MCF 10A (cell line): ENCODE measurements at regions of chr20 and their contacts with region 1.

Region 1: DNA sequence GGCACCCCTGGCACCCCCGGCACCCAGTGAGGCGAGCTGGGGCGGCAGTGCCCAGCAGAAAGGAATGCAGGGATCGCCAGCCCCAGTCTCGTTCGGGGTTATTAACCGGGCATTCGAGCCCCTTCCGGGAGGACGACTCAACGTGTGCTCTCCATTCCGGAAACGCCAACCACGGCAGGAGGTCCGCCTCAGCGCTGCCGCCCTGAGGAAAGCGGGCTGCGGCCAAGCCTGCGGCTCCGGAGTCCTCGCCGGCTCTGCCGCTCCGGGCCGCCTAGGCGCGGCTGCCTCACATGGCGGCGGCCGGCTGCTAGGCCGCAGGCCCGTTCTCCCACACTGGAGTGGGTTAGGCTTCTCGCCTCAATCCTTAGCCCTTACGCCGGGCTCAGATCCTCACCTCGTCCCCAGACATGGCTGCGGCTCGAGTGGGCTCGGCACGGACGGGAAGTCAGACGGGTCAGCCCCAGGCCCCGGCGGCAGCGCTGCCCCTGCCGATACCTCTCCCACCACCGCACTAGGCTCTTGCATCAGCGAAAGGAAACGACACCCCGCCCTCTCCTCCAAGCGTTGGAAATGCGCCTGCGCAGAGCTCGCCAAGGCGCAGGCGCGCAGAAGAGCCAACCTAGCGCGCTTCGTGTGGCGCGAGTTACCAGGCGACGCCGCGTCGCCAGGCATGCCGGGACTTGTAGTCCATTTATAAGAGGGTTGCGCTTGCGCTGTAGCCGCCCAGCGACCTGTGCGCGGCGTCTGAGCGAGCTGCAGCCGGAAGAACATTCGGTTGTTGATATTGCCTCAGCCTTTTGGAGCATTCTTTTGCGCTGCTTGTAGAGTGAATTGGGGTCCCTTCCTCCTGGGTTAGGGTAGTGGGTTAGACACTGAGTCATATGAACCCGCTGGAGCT is at the start of gene EIF2S2:
- DNase-seq: peak; percentile 98
- H3K4me3 Mint-ChIP-seq: peak within 1 kb of the TSS; percentile 91
- H3K27ac Mint-ChIP-seq: peak within 1 kb of the TSS; percentile 98
- H3K4me1 Mint-ChIP-seq: peaks cover 34% of the 10 kb centered on the region
- H3K27me3 Mint-ChIP-seq: no peaks in the 10 kb centered on the region
- CTCF ChIP-seq: no peak
- total RNA-seq, gene EIF2S2: 151 and 191 TPM in 2 replicates

Region 2: GRCh38 chr20:33719989-33720709 is 391.8 kb before region 1 on chr20 and contains the start of gene PXMP4:
- CTCF ChIA-PET with region 1: no interaction called
- POLR2A ChIA-PET with region 1: interaction called, 15 read pairs
- intact Hi-C with region 1: no loop called
- DNase-seq: peak; percentile 98
- H3K4me3 Mint-ChIP-seq: peak within 1 kb of the TSS; percentile 67
- H3K27ac Mint-ChIP-seq: peak within 1 kb of the TSS; percentile 0
- H3K4me1 Mint-ChIP-seq: peaks cover 9% of the 10 kb centered on the region
- H3K27me3 Mint-ChIP-seq: no peaks in the 10 kb centered on the region
- CTCF ChIP-seq: no peak
- total RNA-seq, gene PXMP4: 3.9 and 5.2 TPM in 2 replicates

Region 3: GRCh38 chr20:33803921-33804337 is 308.0 kb before region 1 on chr20:
- CTCF ChIA-PET with region 1: interaction called, 3 read pairs
- POLR2A ChIA-PET with region 1: interaction called, 13 read pairs
- intact Hi-C with region 1: no loop called
- DNase-seq: peak; percentile 40
- H3K4me3 Mint-ChIP-seq: no peak overlapping the region
- H3K27ac Mint-ChIP-seq: no peak overlapping the region
- H3K4me1 Mint-ChIP-seq: no peaks in the 10 kb centered on the region
- H3K27me3 Mint-ChIP-seq: no peaks in the 10 kb centered on the region
- CTCF ChIP-seq: no peak

Region 4: DNA sequence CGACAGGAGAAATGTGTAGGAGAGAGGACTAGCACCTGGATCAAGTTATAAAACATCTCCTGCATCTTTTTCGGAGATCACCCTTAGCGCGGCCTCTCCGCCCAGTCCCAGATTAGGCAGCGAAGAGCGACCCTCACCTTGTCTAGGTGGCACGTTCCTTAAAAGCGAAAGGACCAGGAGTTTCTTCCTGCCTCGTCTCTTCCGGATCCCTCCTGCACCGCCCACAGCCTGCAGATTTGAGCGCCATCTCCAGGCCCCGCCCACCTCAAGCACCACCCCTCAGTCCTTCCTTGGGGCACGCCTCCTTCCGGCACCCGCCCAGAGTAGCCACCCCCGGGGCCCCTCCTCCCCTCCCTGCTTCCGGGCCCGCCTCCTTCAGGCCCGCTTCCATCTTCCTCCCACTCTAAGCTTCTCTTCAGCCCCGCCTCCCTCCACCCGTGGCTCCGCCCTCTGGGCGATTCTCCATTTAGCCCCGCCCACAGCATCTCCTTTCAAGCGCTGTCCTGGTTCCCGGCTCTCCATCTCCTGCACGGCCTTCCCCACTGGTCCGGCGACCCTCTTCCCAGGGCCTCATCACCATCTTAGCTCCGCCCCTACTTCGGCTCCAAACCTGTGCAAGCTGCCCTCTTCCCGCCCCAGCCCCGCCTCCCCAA is 118.9 kb before region 1 on chr20:
- CTCF ChIA-PET with region 1: no interaction called
- POLR2A ChIA-PET with region 1: interaction called, 54 read pairs
- intact Hi-C with region 1: no loop called
- DNase-seq: peak; percentile 98
- H3K4me3 Mint-ChIP-seq: peak overlapping the region; percentile 95
- H3K27ac Mint-ChIP-seq: peak overlapping the region; percentile 96
- H3K4me1 Mint-ChIP-seq: peaks cover 16% of the 10 kb centered on the region
- H3K27me3 Mint-ChIP-seq: no peaks in the 10 kb centered on the region
- CTCF ChIP-seq: no peak

Region 5: DNA sequence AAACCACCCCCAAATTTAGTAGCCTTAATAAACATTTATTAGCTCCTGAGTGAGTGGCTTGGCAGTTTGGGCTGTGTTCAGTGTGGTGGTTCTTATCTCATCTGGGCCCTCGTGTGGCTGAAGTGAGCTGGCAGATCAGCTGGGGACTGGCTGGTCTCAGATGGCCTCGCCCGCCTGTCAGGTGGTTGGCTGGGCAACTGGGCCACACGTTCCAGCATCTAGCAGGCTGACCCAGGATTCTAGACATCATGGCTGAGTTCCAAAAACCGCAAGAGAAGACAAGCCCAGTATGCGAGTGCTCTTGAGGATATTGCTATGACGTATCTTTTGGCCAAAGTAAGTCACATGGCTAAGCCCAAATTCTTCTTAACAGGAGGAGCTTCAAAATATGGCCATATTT is 28.8 kb before region 1 on chr20:
- CTCF ChIA-PET with region 1: interaction called, 6 read pairs
- POLR2A ChIA-PET with region 1: interaction called, 57 read pairs
- intact Hi-C with region 1: no loop called
- DNase-seq: peak; percentile 96
- H3K4me3 Mint-ChIP-seq: no peak overlapping the region
- H3K27ac Mint-ChIP-seq: peak overlapping the region; percentile 82
- H3K4me1 Mint-ChIP-seq: peaks cover 24% of the 10 kb centered on the region
- H3K27me3 Mint-ChIP-seq: no peaks in the 10 kb centered on the region
- CTCF ChIP-seq: no peak

Region 6: DNA sequence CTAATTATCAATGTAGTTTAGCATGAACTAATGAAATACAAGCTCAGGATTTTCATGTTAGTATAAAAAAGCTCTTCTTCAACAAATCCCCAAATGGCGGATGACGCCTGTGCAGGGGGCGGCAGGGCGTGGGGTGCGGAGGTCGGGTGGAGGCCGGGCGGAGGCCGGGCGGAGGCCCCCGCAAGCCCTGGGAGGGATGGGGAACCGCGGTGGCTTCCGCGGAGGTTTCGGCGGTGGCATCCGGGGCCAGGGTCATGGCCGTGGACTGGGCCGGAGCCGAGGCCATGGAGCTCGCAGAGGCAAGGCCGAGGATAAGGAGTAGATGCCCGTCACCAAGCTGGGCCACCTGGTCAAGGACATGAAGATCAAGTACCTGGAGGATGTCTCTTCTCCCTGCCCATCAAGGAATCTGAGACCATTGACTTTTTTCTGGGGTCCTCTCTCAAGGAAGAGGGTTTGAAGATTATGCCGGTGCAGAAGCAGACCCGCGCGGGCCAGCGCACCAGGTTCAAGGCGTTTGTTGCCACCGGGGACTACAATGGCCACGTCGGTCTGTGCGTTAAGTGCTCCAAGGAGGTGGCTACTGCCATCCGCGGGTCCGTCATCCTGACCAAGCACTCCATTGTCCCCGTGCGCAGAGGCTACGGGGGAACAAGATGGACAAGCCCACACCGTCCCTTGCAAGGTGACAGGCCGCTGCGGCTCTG is 10.5 kb after region 1 on chr20:
- CTCF ChIA-PET with region 1: interaction called, 3 read pairs
- POLR2A ChIA-PET with region 1: interaction called, 22 read pairs
- intact Hi-C with region 1: no loop called
- DNase-seq: no peak
- H3K4me3 Mint-ChIP-seq: no peak overlapping the region
- H3K27ac Mint-ChIP-seq: no peak overlapping the region
- H3K4me1 Mint-ChIP-seq: no peaks in the 10 kb centered on the region
- H3K27me3 Mint-ChIP-seq: peaks cover 24% of the 10 kb centered on the region
- CTCF ChIP-seq: no peak

Region 7: GRCh38 chr20:34232494-34233087 is 120.6 kb after region 1 on chr20:
- CTCF ChIA-PET with region 1: no interaction called
- POLR2A ChIA-PET with region 1: no interaction called
- intact Hi-C with region 1: no loop called
- DNase-seq: no peak
- H3K4me3 Mint-ChIP-seq: no peak overlapping the region
- H3K27ac Mint-ChIP-seq: no peak overlapping the region
- H3K4me1 Mint-ChIP-seq: no peaks in the 10 kb centered on the region
- H3K27me3 Mint-ChIP-seq: peaks cover 24% of the 10 kb centered on the region
- CTCF ChIP-seq: no peak